Esophagus squamous epithelium (tissue), 5 donors: ENCODE measurements at regions of chr5 and their contacts with region 1.

Region 1: DNA sequence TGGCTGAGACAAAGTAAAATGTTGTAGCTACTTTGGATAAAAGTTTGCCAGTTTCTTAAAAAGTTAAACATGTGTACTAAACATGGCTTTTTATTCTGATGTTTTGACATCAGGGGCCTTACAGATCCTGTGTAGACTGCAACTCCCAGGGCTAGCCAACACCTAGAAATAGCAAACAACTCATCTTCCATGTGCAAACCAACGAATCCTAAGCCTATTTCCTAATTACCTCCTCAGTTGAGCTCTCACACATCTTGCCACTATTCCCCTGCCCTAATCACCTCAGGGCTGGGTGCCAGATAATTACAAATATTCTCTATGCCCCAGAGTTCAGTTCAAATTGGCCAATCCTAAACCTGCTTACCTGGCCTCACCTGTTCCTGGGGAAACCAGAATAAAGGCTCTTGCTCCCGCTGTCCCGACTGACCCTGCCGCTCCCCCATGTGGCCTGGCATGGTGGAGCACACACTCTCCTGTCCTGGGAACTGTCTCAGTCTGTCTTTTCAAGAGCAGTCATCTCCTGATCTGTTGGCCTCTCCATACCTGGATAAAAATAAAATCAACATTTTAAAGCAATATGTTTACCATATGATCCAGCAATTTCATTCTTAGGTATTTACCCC is 37.1 kb upstream of the FAM169A start:
- DNase-seq: no peak
- H3K4me3 ChIP-seq: no peak overlapping the region
- H3K27ac ChIP-seq: no peak overlapping the region
- H3K4me1 ChIP-seq: no peaks in the 10 kb centered on the region
- H3K27me3 ChIP-seq: no peaks in the 10 kb centered on the region
- CTCF ChIP-seq: peak in 5 of 6 experiments; percentile 37 to 75 (median 57)
- POLR2A ChIP-seq: no peak

Region 2: GRCh38 chr5:74673011-74673790 is 230.1 kb before region 1 on chr5:
- intact Hi-C with region 1: loop called (anchors 10 kb)
- DNase-seq: no peak
- H3K4me3 ChIP-seq: peak overlapping the region in 3 of 4 donors; percentile 8 to 48 (median 27)
- H3K27ac ChIP-seq: peak overlapping the region in 2 of 4 donors; percentile 57 to 64
- H3K4me1 ChIP-seq: peaks cover 0 to 17% (median 0%) of the 10 kb centered on the region in 3 donors
- H3K27me3 ChIP-seq: no peaks in the 10 kb centered on the region
- CTCF ChIP-seq: peak; percentile 25 to 58 (median 44)
- POLR2A ChIP-seq: no peak

Region 3: DNA sequence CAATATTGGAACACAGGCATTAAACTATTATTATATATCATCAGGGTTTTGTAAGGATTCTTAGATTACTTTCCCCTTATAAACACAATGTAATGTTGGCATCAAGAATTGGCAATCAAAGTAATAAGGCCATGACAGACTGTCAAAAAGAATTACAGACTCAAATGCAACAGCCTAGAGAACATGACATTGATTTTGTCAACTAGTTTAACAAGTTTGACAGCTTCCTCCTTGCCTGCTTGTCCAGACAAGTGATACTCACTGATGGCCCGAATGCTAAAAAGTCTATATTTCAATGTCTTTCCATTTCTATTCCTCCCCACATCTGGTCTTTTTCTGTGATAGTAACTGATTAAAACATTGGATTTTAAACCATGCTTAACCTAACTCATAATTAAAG is 339.8 kb after region 1 on chr5:
- intact Hi-C with region 1: no loop called
- DNase-seq: no peak
- H3K4me3 ChIP-seq: no peak overlapping the region
- H3K27ac ChIP-seq: peak overlapping the region in 3 of 4 donors; percentile 56 to 84 (median 71)
- H3K4me1 ChIP-seq: peaks cover 0 to 54% (median 0%) of the 10 kb centered on the region in 3 donors
- H3K27me3 ChIP-seq: no peaks in the 10 kb centered on the region
- CTCF ChIP-seq: no peak
- POLR2A ChIP-seq: no peak

Region 4: DNA sequence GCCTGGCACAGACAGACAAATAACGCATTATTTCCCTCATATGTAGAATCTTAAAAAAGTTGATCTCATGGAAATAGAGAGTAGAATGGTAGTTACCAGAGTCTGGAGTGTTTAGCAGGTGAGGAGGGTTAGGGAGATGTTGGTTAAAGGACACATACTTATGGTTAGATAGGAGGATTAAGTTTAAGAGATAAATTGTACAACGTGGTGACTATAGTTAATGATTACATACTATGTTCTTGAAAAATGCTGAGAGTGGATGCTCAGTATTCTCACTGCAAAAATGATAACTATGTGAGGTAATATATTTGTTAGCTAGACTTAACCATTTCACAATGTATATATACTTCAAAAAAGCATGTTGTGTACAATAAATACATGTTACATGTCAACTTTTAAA is 570.2 kb after region 1 on chr5:
- intact Hi-C with region 1: no loop called
- DNase-seq: no peak
- H3K4me3 ChIP-seq: no peak overlapping the region
- H3K27ac ChIP-seq: no peak overlapping the region
- H3K4me1 ChIP-seq: no peaks in the 10 kb centered on the region
- H3K27me3 ChIP-seq: no peaks in the 10 kb centered on the region
- CTCF ChIP-seq: no peak
- POLR2A ChIP-seq: no peak